ENCODE measurements at regions of chr17 and their contacts with region 1.

Region 1: GRCh38 chr17:14737984-14738659 is 437.2 kb downstream of the HS3ST3B1 start:
- DNase-seq: peak; percentile 97
- H3K4me3 ChIP-seq: no peak overlapping the region
- CTCF ChIP-seq: peak; percentile 50

Region 2: GRCh38 chr17:14725729-14726128 is 12.4 kb before region 1 on chr17:
- CTCF ChIA-PET with region 1: interaction called, 11 read pairs
- POLR2A ChIA-PET with region 1: no interaction called
- DNase-seq: no peak
- H3K4me3 ChIP-seq: no peak overlapping the region
- CTCF ChIP-seq: no peak

Measured in AG04449 (cell line).